IMR-90 (cell line): ENCODE measurements at regions of chr13 and their contacts with region 1.

Region 1: DNA sequence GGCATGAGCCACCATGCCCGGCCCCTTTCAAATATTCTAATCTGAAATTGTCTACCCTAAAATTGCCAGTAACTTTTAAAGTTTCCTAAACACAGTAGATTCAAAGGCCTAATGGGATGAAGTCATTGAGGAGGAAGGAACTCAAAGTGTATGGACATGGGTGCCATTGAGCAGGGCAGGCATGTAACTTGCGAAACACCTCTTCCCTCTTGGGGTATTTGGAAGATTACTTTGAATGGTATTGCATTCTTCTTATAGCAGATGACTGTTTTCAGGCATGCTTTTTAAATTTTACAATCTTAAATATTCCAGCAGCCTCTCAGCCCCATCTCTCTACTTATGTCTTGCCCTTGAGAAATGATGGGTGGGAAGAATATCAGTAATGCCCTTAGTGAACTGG is 21.0 kb downstream of the TM9SF2 start:
- DNase-seq: peak; percentile 25
- ATAC-seq: peak; percentile 61
- H3K4me3 ChIP-seq: no peak overlapping the region
- H3K27ac ChIP-seq: no peak overlapping the region
- H3K4me1 ChIP-seq: 0 out of 2 replicates have a peak, but pooled peaks cover 2% of the 10 kb centered on the region
- H3K27me3 ChIP-seq: no peaks in the 10 kb centered on the region
- CTCF ChIP-seq: no peak
- POLR2A ChIP-seq: no peak
- RAD21 ChIP-seq: no peak

Region 2: DNA sequence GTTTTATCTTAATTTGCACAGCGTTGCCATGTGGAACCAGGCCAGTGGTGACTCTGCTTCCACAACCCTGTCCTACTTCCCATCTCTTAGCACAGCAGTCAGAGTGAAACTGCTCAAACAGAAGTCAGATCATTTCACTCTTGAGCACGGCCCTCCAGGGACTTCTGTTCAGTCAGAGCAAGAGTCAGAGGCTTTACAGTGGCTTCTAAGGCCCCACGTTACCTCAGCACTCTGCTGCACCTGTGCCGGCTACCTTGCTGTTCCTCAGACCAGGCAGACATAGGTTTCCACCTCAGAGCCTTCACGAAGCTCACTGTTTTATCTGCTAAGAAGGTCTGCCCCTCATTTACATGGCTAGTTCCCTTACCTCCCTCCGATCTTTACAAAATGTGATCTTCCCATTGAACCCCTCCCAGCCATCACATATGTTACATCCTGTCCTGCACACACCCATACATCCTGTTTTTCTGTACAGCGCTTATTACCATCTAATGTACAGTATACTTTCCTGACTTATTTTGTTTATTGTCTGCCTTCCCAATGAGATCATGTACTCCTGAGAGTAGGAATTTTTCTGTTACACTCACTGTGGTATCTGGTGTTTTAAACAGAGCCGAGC is 20.6 kb after region 1 on chr13:
- CTCF ChIA-PET with region 1: no interaction called
- POLR2A ChIA-PET with region 1: no interaction called
- dilution Hi-C with region 1: no loop called
- in situ Hi-C with region 1: no loop called
- intact Hi-C with region 1: no loop called
- DNase-seq: no peak
- ATAC-seq: no peak
- H3K4me3 ChIP-seq: no peak overlapping the region
- H3K27ac ChIP-seq: no peak overlapping the region
- H3K4me1 ChIP-seq: no peaks in the 10 kb centered on the region
- H3K27me3 ChIP-seq: no peaks in the 10 kb centered on the region
- CTCF ChIP-seq: no peak
- POLR2A ChIP-seq: no peak
- RAD21 ChIP-seq: no peak

Region 3: DNA sequence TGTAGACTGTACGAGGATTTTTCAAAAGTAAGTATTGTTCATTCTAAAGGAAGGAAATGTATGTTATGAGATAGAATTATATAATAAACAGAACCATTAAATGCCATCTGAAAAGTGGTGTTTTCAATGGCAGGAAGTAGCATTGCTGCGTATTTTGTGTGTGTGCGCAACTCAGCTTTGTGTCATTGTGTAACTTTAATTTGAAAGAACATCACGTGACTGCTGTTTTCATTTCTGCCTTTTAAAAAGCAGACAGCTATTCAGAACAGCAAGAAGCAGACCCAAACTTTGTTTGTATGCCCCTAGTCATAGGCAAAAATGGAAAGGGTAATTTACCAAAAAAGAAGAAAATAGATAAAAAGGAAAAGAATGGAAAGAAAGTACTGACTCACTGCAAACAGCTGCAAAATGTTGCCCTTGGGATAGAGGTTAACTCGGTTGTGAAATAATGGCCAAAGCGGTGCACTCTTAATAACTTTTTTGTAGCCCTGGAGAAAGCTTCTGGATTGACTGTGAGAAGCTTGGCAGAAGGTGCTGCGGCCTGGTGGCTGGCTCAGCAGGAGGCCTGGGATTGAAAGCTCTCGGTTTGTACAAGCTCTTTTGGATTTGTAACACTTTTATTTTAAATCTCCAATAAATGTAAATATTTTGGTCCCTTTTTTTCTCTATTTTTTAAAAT is 969.0 kb after region 1 on chr13:
- CTCF ChIA-PET with region 1: no interaction called
- POLR2A ChIA-PET with region 1: no interaction called
- dilution Hi-C with region 1: no loop called
- in situ Hi-C with region 1: no loop called
- intact Hi-C with region 1: loop called (anchors 5 kb)
- DNase-seq: peak; percentile 63
- ATAC-seq: peak; percentile 35
- H3K4me3 ChIP-seq: no peak overlapping the region
- H3K27ac ChIP-seq: no peak overlapping the region
- H3K4me1 ChIP-seq: peaks cover 2% of the 10 kb centered on the region; the same call in 1 of the 2 replicates
- H3K27me3 ChIP-seq: no peaks in the 10 kb centered on the region
- CTCF ChIP-seq: no peak
- POLR2A ChIP-seq: no peak
- RAD21 ChIP-seq: no peak